K562 (cell line): ENCODE measurements at regions of chr3 and their contacts with region 1.

Region 1: DNA sequence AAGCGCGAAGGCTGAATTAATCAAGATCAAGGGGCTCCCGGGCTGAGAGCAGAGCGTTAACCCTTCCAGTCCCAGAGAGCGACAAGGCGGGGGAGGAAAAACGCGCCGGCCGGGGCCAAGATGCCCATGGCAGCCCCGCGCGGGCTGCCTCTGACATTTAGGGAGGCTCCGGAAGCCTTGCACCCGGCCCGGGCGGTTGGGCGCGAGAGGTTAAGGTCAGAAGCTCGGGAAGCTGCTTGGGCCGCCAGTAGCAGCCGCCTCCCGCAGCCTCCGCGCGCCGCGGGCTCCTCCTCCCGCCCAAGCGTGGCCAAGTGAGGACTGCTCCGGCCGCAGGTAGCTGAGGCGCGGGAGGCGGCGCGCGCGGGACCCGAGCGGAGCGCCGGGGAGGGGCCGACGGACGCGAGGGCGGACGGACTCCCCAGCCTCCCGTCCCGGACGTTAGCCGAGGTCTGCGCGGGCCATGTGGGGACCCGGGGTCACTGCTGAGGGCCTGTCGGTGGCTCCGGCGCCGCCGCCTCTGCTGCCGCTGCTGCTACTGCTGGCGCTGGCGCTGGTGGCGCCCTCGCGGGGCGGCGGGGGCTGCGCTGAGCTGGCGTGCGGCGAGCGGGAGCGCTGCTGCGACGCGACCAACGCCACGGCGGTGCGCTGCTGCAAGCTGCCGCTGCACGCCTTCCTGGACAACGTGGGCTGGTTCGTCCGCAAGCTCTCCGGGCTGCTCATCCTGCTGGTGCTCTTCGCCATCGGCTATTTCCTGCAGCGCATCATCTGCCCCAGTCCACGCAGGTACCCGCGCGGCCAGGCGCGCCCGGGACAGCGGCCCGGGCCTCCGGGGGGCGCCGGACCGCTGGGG is at the start of gene C3orf80:
- DNase-seq: peak; percentile 56 to 74 (median 64)
- ATAC-seq: peak; percentile 96
- H3K4me3 ChIP-seq: peak within 1 kb of the TSS; percentile 51
- H3K27ac ChIP-seq: no peak within 1 kb of the TSS
- H3K4me1 ChIP-seq: peaks cover 0 to 21% of the 10 kb centered on the region in 2 experiments; a peak in 2 of 5 replicates
- H3K27me3 ChIP-seq: peaks cover 8 to 29% of the 10 kb centered on the region in 2 experiments
- CTCF ChIP-seq: peak in 2 of 3 experiments; percentile 20 to 58; a peak in 2 of 6 replicates
- EP300 ChIP-seq: no peak
- POLR2A ChIP-seq: no peak
- RAD21 ChIP-seq: no peak; a peak in 2 of 4 replicates
- polyA plus RNA-seq, gene C3orf80: 0.03 to 0.04 TPM

Region 2: GRCh38 chr3:160331127-160331937 is 105.9 kb after region 1 on chr3:
- CTCF ChIA-PET with region 1: no interaction called
- POLR2A ChIA-PET with region 1: no interaction called
- in situ Hi-C with region 1: no loop called
- intact Hi-C with region 1: loop called (anchors 1 kb)
- DNase-seq: peak in 1 of 4 experiments; percentile 37
- ATAC-seq: peak; percentile 88
- H3K4me3 ChIP-seq: no peak overlapping the region
- H3K27ac ChIP-seq: no peak overlapping the region
- H3K4me1 ChIP-seq: peaks cover 0 to 12% of the 10 kb centered on the region in 2 experiments; a peak in 3 of 5 replicates
- H3K27me3 ChIP-seq: no peaks in the 10 kb centered on the region
- CTCF ChIP-seq: no peak
- EP300 ChIP-seq: peak; percentile 87
- POLR2A ChIP-seq: no peak
- RAD21 ChIP-seq: peak in 1 of 2 experiments; percentile 9; a peak in 1 of 4 replicates

Region 3: GRCh38 chr3:160399125-160400029 is 174.0 kb after region 1 on chr3 and contains the starts of genes IFT80 and SMC4:
- CTCF ChIA-PET with region 1: no interaction called
- POLR2A ChIA-PET with region 1: interaction called, 3 read pairs
- in situ Hi-C with region 1: no loop called
- intact Hi-C with region 1: loop called (anchors 5 kb)
- DNase-seq: peak; percentile 92 to 97 (median 94)
- ATAC-seq: peak; percentile 81
- H3K4me3 ChIP-seq: peak within 1 kb of the TSS; percentile 71
- H3K27ac ChIP-seq: peak within 1 kb of the TSS; percentile 99
- H3K4me1 ChIP-seq: peaks cover 8 to 14% of the 10 kb centered on the region in 2 experiments
- H3K27me3 ChIP-seq: no peaks in the 10 kb centered on the region
- CTCF ChIP-seq: no peak; a peak in 1 of 6 replicates
- EP300 ChIP-seq: peak; percentile 66
- POLR2A ChIP-seq: peak; percentile 95
- RAD21 ChIP-seq: no peak
- polyA plus RNA-seq, gene IFT80: 6.7 to 7.2 TPM
- polyA plus RNA-seq, gene SMC4: 87.9 to 105 TPM